Esophagus muscularis mucosa (tissue), 4 donors: ENCODE measurements at regions of chr20 and their contacts with region 1.

Region 1: GRCh38 chr20:36605399-36606157 is at the start of gene RAB5IF:
- DNase-seq: peak; percentile 100
- H3K4me3 ChIP-seq: peak within 1 kb of the TSS; percentile 77 to 99 (median 96)
- H3K27ac ChIP-seq: peak within 1 kb of the TSS; percentile 88 to 96 (median 92)
- H3K4me1 ChIP-seq: peaks cover 18 to 30% (median 26%) of the 10 kb centered on the region in 4 donors
- H3K27me3 ChIP-seq: no peaks in the 10 kb centered on the region
- CTCF ChIP-seq: peak; percentile 87 to 94 (median 94)
- EP300 ChIP-seq: no peak
- POLR2A ChIP-seq: no peak
- total RNA-seq, gene RAB5IF: 60.2 to 94.8 (median 81.6) TPM

Region 2: DNA sequence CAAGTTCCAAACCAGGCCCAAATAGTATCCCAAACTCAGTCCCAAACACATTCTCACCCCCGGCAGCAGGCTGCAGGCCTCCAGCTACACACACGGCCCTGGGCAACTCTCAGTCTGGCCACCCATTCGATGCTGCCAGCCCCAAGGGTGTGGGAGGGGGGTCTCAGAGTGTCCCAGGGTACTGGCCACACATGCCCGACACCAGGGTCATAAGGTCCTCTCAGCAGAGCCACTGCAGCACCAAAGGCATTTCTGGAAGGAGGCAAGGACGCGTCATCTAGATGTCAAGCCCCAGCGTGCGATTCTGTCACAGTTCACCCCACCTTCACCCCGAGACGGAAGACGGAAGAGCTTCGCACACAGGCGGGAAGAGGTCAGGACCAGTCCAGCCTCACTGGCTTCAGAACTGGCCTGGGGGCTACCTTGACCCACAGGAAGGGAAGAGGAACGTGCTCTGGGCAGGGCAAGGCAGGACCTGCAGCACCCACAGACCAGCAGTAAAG is 54.7 kb before region 1 on chr20:
- intact Hi-C with region 1: loop called (anchors 1 kb)
- DNase-seq: no peak
- H3K4me3 ChIP-seq: no peak overlapping the region
- H3K27ac ChIP-seq: peak overlapping the region; percentile 70 to 97 (median 88)
- H3K4me1 ChIP-seq: peaks cover 22 to 59% (median 56%) of the 10 kb centered on the region in 4 donors
- H3K27me3 ChIP-seq: no peaks in the 10 kb centered on the region
- CTCF ChIP-seq: no peak
- EP300 ChIP-seq: no peak
- POLR2A ChIP-seq: no peak

Region 3: DNA sequence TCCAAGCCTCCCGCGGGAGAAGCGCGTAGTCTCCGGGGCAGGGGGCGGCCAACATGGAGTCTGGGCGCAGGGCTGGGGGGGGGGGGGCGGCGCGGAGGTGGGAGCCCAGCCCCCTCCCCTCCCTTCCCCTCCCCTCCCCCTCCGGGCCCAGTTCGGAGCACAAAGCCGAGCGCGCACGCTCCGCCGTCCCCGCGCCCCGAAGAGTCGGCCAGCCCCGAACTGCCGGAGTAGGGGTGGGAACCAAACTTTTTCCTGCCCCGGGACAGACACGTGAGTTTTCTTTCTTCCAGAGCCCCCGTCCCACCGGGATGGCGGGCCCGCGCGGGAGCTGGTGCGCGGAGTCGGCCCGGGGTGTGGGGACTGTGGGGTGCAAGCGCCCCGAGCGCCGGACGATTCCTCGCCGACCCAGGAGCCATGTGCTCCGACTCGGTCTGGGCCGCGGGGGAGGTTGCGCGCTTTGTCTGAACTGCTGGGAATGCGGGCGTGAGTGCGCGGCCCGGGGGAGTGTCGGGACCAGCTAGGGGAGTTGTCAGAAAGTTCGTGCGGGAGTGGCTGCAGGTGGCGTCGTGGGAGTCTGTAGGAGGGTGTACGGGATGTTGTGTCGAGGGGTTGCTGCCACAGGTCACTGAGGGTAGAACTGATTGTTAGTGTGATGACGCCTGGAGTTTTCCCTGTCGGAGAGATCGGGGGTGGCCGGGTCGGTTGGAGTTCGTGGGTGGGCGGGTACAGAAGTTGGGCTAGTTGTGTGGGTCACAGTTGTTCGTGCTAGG is 31.0 kb before region 1 on chr20:
- intact Hi-C with region 1: loop called (anchors 2 kb)
- DNase-seq: no peak
- H3K4me3 ChIP-seq: peak overlapping the region; percentile 91 to 94 (median 92)
- H3K27ac ChIP-seq: peak overlapping the region; percentile 90 to 95 (median 95)
- H3K4me1 ChIP-seq: peaks cover 15 to 49% (median 40%) of the 10 kb centered on the region in 4 donors
- H3K27me3 ChIP-seq: no peaks in the 10 kb centered on the region
- CTCF ChIP-seq: peak in 1 of 3 experiments; percentile 3
- EP300 ChIP-seq: no peak
- POLR2A ChIP-seq: no peak

Region 4: DNA sequence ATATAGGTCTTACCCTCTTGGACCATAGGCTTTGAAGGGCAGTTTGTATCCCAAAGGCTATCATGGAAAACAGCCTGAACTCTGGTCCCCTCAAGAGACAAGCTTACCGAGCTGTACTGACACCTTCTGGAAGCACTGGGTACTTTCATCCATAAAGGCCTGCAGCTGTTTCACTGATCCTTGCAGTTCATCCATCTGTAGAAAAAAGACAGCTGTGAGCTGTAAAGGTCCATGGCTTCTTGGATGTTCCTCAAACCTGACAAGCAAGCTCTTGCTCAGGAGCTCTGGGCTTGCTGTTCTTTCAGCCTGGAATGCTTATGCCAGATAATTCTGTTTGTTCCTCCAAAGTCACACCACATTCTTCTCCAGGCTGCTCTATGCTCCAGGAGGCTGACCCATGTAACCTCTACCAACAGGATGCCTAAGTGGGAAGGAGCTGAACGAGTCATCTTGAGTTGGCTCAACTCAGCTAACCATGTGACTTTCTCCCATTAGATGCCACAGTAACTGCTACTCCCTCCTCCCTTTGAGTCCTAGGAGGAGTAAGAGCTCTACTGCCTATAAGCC is 149.2 kb after region 1 on chr20:
- intact Hi-C with region 1: loop called (anchors 10 kb)
- DNase-seq: no peak
- H3K4me3 ChIP-seq: no peak overlapping the region
- H3K27ac ChIP-seq: peak overlapping the region in 3 of 4 donors; percentile 2 to 50 (median 49)
- H3K4me1 ChIP-seq: peaks cover 7 to 14% (median 8%) of the 10 kb centered on the region in 4 donors
- H3K27me3 ChIP-seq: no peaks in the 10 kb centered on the region
- CTCF ChIP-seq: peak; percentile 74 to 85 (median 81)
- EP300 ChIP-seq: no peak
- POLR2A ChIP-seq: no peak

Region 5: DNA sequence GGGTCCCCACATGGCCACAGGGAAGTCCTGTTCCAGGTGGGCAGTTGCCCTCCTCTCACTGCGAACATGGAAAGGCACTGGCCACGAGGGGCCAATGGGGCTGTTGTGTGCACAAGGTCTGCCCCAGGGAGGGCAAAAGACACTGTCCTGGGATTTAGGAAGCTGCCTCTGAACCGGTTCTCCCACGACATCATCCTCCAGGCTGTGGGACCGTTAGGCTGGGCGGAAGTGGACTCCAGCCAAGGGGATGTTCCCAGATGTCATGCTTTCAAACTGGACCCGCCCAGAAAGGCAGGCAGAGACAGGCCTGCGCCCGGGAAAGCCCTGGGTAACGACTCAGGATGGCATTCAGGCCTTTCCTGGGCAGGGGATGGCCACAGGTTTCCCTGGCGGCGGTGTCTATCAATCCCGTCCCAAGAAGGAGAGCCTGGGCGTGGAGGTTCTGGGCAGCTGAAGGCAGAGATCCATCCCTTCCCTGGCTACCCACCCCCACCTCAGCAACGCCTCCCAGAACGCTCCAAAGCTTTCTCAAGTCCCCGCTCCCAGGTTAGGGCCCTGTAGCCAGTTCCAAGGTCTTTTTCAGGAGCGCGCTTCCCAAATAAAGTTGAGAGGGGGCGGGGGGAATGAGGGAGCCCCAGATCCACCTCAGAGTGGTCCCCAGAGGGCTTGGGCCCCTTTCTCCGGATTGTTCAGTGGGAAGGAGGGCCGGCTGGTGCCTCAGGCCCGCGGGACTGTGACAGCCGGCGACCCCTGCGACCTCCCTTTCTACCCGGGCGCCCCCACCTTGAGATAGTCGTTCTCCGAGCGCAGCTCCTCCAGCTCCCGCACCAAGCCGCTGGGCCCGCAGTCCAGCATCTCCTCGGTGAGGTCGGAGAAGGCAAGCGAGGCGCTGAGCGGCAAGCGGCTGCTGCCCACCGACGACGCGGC is 256.6 kb after region 1 on chr20:
- intact Hi-C with region 1: loop called (anchors 10 kb)
- DNase-seq: peak; percentile 98
- H3K4me3 ChIP-seq: peak overlapping the region; percentile 71 to 89 (median 80)
- H3K27ac ChIP-seq: peak overlapping the region; percentile 94 to 96 (median 94)
- H3K4me1 ChIP-seq: peaks cover 50 to 74% (median 69%) of the 10 kb centered on the region in 4 donors
- H3K27me3 ChIP-seq: no peaks in the 10 kb centered on the region
- CTCF ChIP-seq: no peak
- EP300 ChIP-seq: no peak
- POLR2A ChIP-seq: peak; percentile 17